A673 (cell line): ENCODE measurements at regions of chr7 and their contacts with region 1.

Region 1: DNA sequence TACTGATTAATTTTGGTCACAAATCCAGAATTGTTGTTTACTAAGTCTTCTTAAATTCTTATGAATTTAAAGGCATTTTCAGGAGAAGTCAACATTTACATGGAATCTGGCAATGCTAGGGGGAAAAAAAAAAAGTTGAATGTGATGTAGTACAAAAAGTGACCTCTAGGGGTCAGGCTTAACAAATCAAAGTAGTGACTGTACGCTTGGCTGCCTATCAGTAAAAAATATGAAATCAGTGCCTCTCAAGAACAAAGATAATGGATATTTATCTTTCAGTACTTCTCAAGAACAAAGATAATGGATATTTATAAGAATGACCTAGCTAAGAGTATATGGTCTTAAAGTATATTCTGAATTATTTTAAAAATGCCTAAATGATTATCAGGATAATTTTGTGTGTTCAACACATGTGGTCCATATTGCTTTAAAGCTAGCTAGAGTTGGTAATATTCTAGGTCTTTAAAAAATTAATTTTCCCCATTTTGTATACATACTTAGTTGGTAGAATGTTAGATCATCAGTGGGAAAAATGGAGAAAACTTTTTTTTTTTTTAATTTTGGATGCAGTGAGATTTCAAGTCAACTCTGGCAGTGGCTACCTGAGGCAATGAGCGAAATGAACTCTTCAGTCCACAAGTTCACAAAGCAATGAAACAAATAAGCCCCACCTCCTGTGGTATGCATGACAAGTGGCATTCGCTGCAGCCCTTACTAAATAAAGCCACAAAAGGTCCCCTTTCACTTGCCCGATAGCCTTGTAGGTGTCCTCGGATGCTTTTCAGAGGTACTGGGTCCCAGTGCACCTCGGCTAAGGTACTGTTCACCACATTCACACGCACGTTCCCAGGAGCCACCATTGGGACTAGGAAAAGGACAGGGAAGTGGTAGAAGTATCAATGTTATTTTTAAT is 51.2 kb upstream of the LAMB4 start:
- DNase-seq: peak; percentile 72
- H3K4me3 ChIP-seq: no peak overlapping the region
- H3K27ac ChIP-seq: no peak overlapping the region
- H3K4me1 ChIP-seq: no peaks in the 10 kb centered on the region
- H3K27me3 ChIP-seq: no peaks in the 10 kb centered on the region
- CTCF ChIP-seq: peak; percentile 81

Region 2: DNA sequence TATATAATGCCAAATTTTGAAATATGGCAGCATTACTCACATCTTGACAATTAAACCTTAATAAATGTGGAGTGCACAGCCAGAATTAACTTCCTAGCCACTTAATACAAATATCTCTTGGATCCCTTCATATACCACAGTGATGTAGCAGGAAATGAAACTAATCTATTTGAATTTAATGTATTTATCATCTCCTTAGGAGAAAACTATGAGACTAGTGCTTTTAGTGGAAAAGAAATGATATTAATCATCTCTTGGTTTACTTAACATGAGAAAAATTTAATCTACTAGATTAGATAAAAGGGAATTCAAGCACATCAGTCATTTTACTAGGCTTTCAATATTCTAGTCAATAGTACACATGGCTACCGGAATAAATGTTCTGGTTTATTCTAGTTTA is 767.1 kb before region 1 on chr7:
- CTCF ChIA-PET with region 1: no interaction called
- POLR2A ChIA-PET with region 1: no interaction called
- intact Hi-C with region 1: no loop called
- DNase-seq: no peak
- H3K4me3 ChIP-seq: no peak overlapping the region
- H3K27ac ChIP-seq: no peak overlapping the region
- H3K4me1 ChIP-seq: no peaks in the 10 kb centered on the region
- H3K27me3 ChIP-seq: no peaks in the 10 kb centered on the region
- CTCF ChIP-seq: no peak

Region 3: DNA sequence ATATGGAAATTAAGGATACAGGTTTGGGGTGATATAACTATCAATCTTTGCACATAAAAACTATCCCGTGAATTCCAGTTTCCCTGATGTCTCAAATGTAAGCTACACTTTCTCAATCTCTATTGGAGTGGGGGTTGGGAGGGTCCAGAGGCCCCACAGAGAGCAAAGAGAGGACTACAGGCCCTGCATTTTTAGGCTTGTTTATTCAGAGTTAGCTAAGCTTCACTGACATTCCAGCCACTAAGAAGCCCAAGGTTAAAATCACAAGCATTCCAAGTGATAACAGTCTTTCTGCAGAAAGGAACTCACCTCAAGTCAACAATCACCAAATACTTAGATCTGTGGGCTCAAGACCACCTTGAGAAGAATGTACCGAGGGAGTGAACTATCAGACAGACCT is 146.7 kb before region 1 on chr7:
- CTCF ChIA-PET with region 1: no interaction called
- POLR2A ChIA-PET with region 1: no interaction called
- intact Hi-C with region 1: no loop called
- DNase-seq: no peak
- H3K4me3 ChIP-seq: no peak overlapping the region
- H3K27ac ChIP-seq: no peak overlapping the region
- H3K4me1 ChIP-seq: no peaks in the 10 kb centered on the region
- H3K27me3 ChIP-seq: no peaks in the 10 kb centered on the region
- CTCF ChIP-seq: no peak

Region 4: DNA sequence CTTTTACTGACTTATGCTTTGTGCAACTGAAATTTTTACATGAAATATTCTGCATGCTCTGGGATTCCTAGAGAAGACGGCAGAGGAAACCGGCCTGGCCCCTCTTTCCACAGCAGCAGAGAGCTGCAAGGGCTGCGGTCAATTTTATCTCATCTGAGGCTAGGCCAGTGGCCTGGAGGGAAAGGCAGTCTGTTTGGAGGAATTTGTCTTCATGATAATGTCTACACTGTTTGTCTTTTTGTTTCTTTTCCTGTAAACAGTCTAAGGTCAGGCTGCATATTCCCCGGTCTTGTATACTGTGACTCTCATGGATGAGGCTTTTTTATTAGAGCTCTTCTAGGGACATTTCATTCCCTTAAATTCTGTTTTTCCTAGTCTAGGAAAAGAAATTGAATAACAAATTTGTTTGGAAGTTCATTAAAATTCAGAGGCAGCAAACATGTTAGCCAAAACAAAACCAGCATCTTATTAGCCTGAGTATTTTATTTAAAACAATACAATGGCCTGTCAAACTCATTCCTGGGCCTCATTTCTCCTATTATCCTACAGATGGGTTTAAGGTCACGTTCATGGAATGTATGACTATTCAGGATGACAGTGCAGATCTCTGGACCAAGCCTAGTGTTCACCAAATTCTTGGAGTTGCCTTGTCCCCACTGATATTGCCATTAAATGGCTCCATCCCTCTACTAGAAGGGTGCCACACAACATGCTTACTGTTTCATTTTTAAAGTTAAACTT is 77.6 kb before region 1 on chr7:
- CTCF ChIA-PET with region 1: no interaction called
- POLR2A ChIA-PET with region 1: no interaction called
- intact Hi-C with region 1: no loop called
- DNase-seq: no peak
- H3K4me3 ChIP-seq: no peak overlapping the region
- H3K27ac ChIP-seq: no peak overlapping the region
- H3K4me1 ChIP-seq: no peaks in the 10 kb centered on the region
- H3K27me3 ChIP-seq: no peaks in the 10 kb centered on the region
- CTCF ChIP-seq: no peak

Region 5: GRCh38 chr7:108294595-108294994 is 113.3 kb after region 1 on chr7:
- CTCF ChIA-PET with region 1: no interaction called
- POLR2A ChIA-PET with region 1: no interaction called
- intact Hi-C with region 1: loop called (anchors 5 kb)
- DNase-seq: peak; percentile 97
- H3K4me3 ChIP-seq: no peak overlapping the region
- H3K27ac ChIP-seq: peak overlapping the region; percentile 86
- H3K4me1 ChIP-seq: peaks cover 86% of the 10 kb centered on the region
- H3K27me3 ChIP-seq: no peaks in the 10 kb centered on the region
- CTCF ChIP-seq: no peak

Region 6: GRCh38 chr7:108459931-108460551 is 278.7 kb after region 1 on chr7:
- CTCF ChIA-PET with region 1: no interaction called
- POLR2A ChIA-PET with region 1: no interaction called
- intact Hi-C with region 1: loop called (anchors 1 kb)
- DNase-seq: peak; percentile 80
- H3K4me3 ChIP-seq: no peak overlapping the region
- H3K27ac ChIP-seq: no peak overlapping the region
- H3K4me1 ChIP-seq: peaks cover 7% of the 10 kb centered on the region
- H3K27me3 ChIP-seq: no peaks in the 10 kb centered on the region
- CTCF ChIP-seq: peak; percentile 80

Region 7: GRCh38 chr7:108497082-108497725 is 315.9 kb after region 1 on chr7:
- CTCF ChIA-PET with region 1: no interaction called
- POLR2A ChIA-PET with region 1: no interaction called
- intact Hi-C with region 1: loop called (anchors 2 kb)
- DNase-seq: peak; percentile 77
- H3K4me3 ChIP-seq: no peak overlapping the region
- H3K27ac ChIP-seq: no peak overlapping the region
- H3K4me1 ChIP-seq: no peaks in the 10 kb centered on the region
- H3K27me3 ChIP-seq: no peaks in the 10 kb centered on the region
- CTCF ChIP-seq: peak; percentile 90